Mammary epithelial cell (primary cell): ENCODE measurements at regions of chr14 and their contacts with region 1.

Region 1: GRCh38 chr14:75278422-75279161 is at the start of gene FOS:
- DNase-seq: peak; percentile 91
- H3K4me3 ChIP-seq: peak within 1 kb of the TSS; percentile 66 to 96 (median 81)
- H3K27ac ChIP-seq: peak within 1 kb of the TSS; percentile 97
- H3K4me1 ChIP-seq: peaks cover 31% of the 10 kb centered on the region
- H3K27me3 ChIP-seq: no peaks in the 10 kb centered on the region
- CTCF ChIP-seq: no peak
- total RNA-seq, gene FOS: 78.5 to 204 TPM

Region 2: GRCh38 chr14:75147423-75148071 is 131.0 kb before region 1 on chr14:
- CTCF ChIA-PET with region 1: no interaction called
- dilution Hi-C with region 1: no loop called
- in situ Hi-C with region 1: no loop called
- intact Hi-C with region 1: loop called (anchors 5 kb)
- DNase-seq: peak; percentile 95
- H3K4me3 ChIP-seq: no peak overlapping the region
- H3K27ac ChIP-seq: peak overlapping the region; percentile 75
- H3K4me1 ChIP-seq: peaks cover 23% of the 10 kb centered on the region
- H3K27me3 ChIP-seq: no peaks in the 10 kb centered on the region
- CTCF ChIP-seq: peak; percentile 64 to 72

Region 3: GRCh38 chr14:75176142-75176820 is 102.3 kb before region 1 on chr14 and contains the start of gene TMED10:
- CTCF ChIA-PET with region 1: no interaction called
- dilution Hi-C with region 1: no loop called
- in situ Hi-C with region 1: no loop called
- intact Hi-C with region 1: loop called (anchors 1 kb)
- DNase-seq: peak; percentile 84
- H3K4me3 ChIP-seq: peak within 1 kb of the TSS; percentile 60 to 87 (median 80)
- H3K27ac ChIP-seq: peak within 1 kb of the TSS; percentile 98
- H3K4me1 ChIP-seq: peaks cover 13% of the 10 kb centered on the region
- H3K27me3 ChIP-seq: no peaks in the 10 kb centered on the region
- CTCF ChIP-seq: no peak
- total RNA-seq, gene TMED10: 389 to 397 TPM

Region 4: DNA sequence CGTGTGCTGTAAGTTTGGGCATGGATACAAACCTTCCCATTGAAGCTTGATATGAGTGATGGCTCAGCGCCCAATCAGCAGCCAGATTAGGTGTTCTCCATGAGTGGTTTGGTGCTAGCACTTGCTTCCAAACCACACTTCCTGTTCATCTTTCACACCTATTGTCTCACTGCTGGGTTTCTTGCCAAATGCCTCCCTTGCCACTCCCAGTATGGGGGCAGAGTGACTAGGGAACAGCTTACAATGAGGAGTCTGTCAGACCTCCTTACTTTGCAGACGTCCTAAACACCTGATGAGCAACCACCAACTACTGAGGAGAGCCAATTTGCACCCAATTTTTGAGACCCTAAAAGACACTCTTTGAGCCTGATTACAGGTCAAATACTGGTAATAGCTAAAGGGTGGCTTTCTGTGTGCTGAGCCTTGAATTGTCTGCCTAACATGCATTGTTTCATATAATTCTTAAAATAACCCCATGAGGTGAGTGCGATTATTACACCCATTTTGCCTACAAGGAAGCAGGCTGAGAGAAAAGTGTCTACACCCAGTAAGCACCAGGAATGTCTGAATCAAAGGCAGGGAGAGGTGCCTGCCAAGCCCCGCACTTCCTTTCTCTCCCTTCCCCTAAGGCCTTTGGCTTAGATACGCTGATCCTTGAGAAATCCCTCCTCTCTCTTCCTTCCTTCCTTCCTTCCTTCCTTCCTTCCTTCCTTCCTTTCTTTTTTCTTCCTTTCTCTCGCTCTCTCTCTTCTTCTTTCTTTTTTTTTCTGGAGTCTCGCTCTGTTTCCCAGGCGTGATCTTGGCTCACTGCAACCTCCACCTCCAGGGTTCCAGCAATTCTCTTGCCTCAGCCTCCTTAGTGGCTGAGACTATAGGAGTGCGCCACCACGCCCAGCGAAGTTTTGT is 48.2 kb before region 1 on chr14:
- CTCF ChIA-PET with region 1: interaction called, 3 read pairs
- dilution Hi-C with region 1: no loop called
- in situ Hi-C with region 1: no loop called
- intact Hi-C with region 1: loop called (anchors 1 kb)
- DNase-seq: peak; percentile 92
- H3K4me3 ChIP-seq: no peak overlapping the region
- H3K27ac ChIP-seq: peak overlapping the region; percentile 92
- H3K4me1 ChIP-seq: peaks cover 32% of the 10 kb centered on the region
- H3K27me3 ChIP-seq: no peaks in the 10 kb centered on the region
- CTCF ChIP-seq: peak; percentile 34 to 38

Region 5: DNA sequence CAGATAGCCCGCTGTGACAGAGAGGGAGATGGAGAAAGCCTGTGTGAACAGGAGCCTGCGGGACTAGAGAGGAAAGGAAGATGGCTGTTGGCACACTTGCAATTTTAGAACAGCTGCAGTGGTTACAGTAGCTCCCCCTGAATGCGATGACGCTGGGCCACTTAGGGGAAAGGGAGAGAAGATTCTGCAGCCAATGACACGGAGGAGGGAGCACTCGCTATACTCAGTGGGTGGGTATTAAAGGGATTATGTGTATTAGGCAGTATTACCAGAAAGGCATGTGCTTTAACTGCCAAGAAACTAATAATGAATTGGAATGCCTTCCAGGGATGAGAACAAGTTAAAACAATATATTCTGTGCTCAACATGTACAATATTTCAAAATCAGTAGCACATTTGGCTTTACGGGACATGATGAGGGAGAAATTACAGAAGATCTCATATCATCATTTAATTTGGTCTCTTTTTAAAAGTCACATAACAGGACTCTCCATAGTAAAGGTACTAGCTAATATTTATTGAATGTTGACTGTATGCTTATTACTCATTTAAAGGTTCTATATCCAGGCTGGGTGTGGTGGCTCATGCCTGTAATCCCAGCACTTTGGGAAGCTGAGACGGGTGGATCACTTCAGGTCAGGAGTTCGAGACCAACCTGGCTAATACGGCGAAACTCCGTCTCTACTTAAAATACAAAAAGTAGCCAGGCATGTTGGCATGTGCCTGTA is 35.9 kb before region 1 on chr14:
- CTCF ChIA-PET with region 1: no interaction called
- dilution Hi-C with region 1: no loop called
- in situ Hi-C with region 1: no loop called
- intact Hi-C with region 1: loop called (anchors 5 kb)
- DNase-seq: peak; percentile 84
- H3K4me3 ChIP-seq: no peak overlapping the region
- H3K27ac ChIP-seq: peak overlapping the region; percentile 73
- H3K4me1 ChIP-seq: peaks cover 10% of the 10 kb centered on the region
- H3K27me3 ChIP-seq: no peaks in the 10 kb centered on the region
- CTCF ChIP-seq: no peak

Region 6: DNA sequence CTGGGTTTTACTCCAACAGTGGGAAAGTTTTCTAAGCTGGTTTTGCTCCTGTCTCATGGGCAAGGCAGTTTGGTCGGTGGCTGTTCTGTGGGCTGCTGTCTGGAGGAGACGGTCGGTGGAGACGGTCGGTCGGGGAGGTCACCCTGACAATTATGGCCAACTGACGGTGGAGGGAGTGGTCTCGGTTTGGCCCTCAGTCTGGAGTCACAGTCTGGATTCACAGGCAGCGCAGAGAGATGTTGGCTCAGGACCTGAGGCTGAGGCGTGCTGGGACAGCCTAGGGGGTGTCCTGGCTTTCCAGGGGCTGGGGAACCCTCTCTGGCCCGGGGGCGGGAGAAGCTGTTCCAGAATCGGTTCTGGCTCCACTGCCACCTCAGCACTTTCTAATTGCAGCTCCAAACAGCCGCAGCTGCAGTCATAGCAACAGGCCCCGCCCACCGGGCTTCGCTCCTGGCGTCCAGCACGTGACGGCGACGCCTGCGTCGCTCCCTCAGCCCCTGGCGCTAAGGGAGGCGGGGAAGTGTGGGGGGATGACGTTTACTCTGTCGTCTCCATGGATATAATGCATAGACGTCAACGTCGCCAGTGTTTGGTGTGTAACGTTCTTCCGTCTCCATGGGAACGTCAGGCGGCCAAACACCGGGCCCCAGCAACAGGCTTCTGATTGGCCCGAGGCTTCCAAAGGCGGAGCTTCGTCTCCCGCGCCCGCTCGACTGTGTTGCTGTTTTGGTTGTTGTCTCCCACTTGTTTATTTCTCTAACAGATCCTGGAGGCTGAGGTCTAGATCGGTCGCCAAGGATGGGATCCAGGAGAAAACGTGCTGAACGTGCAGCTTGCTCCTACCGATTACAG is 19.8 kb before region 1 on chr14:
- CTCF ChIA-PET with region 1: no interaction called
- dilution Hi-C with region 1: no loop called
- in situ Hi-C with region 1: no loop called
- intact Hi-C with region 1: loop called (anchors 1 kb)
- DNase-seq: peak; percentile 100
- H3K4me3 ChIP-seq: peak overlapping the region; percentile 0 to 37 (median 27)
- H3K27ac ChIP-seq: peak overlapping the region; percentile 97
- H3K4me1 ChIP-seq: peaks cover 52% of the 10 kb centered on the region
- H3K27me3 ChIP-seq: no peaks in the 10 kb centered on the region
- CTCF ChIP-seq: no peak

Region 7: GRCh38 chr14:75293920-75294642 is 15.5 kb after region 1 on chr14:
- CTCF ChIA-PET with region 1: no interaction called
- dilution Hi-C with region 1: no loop called
- in situ Hi-C with region 1: no loop called
- intact Hi-C with region 1: loop called (anchors 1 kb)
- DNase-seq: peak; percentile 95
- H3K4me3 ChIP-seq: peak overlapping the region; percentile 73 to 86 (median 80)
- H3K27ac ChIP-seq: peak overlapping the region; percentile 99
- H3K4me1 ChIP-seq: peaks cover 32% of the 10 kb centered on the region
- H3K27me3 ChIP-seq: no peaks in the 10 kb centered on the region
- CTCF ChIP-seq: peak in 1 of 2 donors; percentile 3

Region 8: DNA sequence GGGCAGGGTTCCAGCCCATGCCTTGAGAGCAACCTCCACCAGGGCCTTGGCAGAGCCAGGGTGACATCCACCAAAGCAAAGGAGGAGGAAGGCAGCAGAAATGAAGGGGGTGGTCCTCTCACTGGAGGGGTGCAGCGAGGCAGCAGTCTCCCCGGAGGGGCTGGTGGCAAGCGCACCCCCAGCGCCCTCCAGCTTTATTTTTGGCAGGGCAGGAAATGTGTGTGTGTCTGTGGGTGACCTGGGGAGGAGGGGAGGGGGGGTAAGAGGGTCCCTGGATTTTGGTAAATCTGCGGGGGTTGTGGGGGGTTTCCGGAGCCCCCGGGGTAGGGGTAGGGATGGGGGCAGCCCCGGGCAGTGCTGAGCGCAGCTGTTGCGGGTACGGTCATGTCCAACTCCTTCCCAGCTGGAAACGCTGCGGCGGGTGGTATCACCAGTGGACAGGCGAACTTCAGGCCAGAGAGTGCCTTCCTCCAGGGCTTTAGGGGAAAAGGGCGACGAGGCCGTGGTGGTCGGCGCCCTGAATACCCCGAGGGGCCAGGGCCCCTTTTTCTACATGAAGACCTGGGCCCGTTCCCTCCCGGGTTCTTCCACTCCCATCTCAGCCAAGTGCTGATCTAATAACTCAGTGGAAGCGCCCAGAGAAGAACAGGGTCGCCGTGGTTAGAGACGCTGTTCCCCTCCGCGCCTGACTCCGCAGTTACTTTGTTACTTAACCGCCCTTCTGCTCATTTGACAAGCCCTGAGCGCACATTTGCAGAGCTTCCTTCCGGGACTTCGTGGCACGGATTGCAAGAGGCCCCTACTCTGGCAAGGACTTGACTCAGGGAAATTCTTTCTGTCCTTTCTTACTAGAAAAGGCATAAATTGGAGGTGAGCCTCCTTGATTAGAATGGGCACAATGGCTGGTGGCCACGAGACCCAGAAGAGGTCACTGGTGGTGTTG is 55.3 kb after region 1 on chr14:
- CTCF ChIA-PET with region 1: no interaction called
- dilution Hi-C with region 1: no loop called
- in situ Hi-C with region 1: no loop called
- intact Hi-C with region 1: no loop called
- DNase-seq: no peak
- H3K4me3 ChIP-seq: no peak overlapping the region
- H3K27ac ChIP-seq: no peak overlapping the region
- H3K4me1 ChIP-seq: no peaks in the 10 kb centered on the region
- H3K27me3 ChIP-seq: no peaks in the 10 kb centered on the region
- CTCF ChIP-seq: no peak

Region 9: DNA sequence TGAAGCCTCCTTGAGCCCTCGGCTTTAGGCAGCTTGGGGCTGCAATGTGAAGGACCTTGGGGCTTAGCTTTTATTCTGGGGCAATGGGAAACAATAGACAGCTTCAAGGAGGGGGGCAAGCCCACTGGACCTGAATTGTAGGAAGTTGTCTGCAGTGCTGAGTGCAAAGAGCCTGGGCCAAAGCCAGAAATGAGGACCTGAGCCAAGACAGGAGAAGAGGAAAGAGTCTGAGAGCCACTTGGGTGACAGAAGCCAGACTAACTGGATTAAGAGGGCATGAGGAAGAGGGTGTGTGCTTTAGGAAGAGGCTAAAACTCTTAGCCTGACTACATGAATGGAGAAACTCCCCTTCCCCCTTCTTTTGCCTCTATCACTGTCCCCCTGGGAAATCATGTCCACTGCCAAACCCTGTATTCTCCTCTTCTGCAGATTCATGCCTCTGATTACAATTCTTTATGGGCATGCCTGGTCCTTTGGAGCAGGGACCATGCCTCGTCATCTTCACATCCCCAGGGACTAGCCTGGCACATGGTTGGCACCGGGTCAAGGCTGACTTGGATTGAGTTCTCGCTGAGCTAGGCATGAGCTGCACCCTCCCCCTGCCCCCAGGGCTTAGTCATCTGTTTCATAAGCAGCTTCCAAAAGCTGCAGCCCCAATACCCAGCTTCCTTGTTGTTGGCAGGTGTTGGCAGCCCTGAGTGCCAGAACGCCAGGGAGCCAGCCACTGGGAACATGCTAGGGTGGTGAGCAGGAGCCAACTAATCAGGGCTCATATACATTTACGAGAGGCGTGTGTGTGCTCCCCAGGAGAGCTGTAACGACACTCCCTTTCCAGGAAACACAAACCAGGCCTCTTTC is 121.5 kb after region 1 on chr14:
- CTCF ChIA-PET with region 1: no interaction called
- dilution Hi-C with region 1: no loop called
- in situ Hi-C with region 1: no loop called
- intact Hi-C with region 1: no loop called
- DNase-seq: peak; percentile 86
- H3K4me3 ChIP-seq: no peak overlapping the region
- H3K27ac ChIP-seq: no peak overlapping the region
- H3K4me1 ChIP-seq: peaks cover 6% of the 10 kb centered on the region
- H3K27me3 ChIP-seq: no peaks in the 10 kb centered on the region
- CTCF ChIP-seq: no peak

Region 10: DNA sequence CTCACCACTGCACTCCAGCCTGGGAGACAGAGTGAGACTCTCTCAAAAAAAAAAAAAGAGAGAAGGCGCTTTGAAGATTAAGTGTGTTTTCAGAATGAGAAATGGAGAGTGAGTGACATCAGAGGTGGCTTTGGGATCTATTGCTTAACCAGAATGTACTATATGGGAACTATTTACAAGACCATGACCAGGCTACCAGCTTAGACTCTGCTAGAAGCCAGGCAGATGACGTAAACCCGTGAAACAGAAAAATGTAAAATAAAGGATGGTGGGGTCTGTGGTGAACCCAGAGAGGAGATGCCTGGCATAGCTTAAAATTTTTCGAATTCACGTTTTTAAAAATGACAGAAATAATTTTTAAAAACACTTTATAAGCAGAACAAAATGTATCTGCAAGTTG is 788.9 kb after region 1 on chr14:
- CTCF ChIA-PET with region 1: no interaction called
- dilution Hi-C with region 1: no loop called
- in situ Hi-C with region 1: no loop called
- intact Hi-C with region 1: no loop called
- DNase-seq: no peak
- H3K4me3 ChIP-seq: no peak overlapping the region
- H3K27ac ChIP-seq: no peak overlapping the region
- H3K4me1 ChIP-seq: no peaks in the 10 kb centered on the region
- H3K27me3 ChIP-seq: no peaks in the 10 kb centered on the region
- CTCF ChIP-seq: no peak